PC-9 (cell line): ENCODE measurements at regions of chr7 and their contacts with region 1.

Region 1: DNA sequence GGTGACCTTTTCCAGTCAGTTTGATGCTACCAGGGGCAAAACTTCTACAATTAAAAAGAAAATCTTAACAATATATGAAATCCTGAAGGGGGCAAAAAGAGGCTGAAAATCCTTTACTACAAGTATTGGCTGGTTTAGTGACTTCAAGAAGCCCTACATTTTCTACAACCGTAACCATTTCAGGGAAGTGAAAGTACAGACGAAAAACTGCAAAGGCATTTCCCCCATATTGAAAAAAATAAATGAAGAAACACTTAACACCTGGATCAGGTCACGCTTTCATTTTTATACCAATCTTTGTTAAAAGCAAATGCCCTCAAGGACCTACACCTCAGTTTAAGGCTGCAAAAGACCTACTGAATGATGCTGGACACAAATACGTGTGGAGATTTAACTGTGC is 38.6 kb downstream of the IL6 start:
- DNase-seq: no peak
- H3K4me3 ChIP-seq: no peak overlapping the region
- H3K27ac ChIP-seq: no peak overlapping the region
- H3K4me1 ChIP-seq: no peaks in the 10 kb centered on the region
- H3K27me3 ChIP-seq: no peaks in the 10 kb centered on the region
- CTCF ChIP-seq: no peak

Region 2: GRCh38 chr7:22597845-22598244 is 167.8 kb before region 1 on chr7:
- CTCF ChIA-PET with region 1: no interaction called
- POLR2A ChIA-PET with region 1: interaction called, 10 read pairs
- intact Hi-C with region 1: no loop called
- DNase-seq: peak in 1 of 2 experiments; percentile 60
- H3K4me3 ChIP-seq: no peak overlapping the region
- H3K27ac ChIP-seq: peak overlapping the region; percentile 47
- H3K4me1 ChIP-seq: peaks cover 25% of the 10 kb centered on the region
- H3K27me3 ChIP-seq: no peaks in the 10 kb centered on the region
- CTCF ChIP-seq: no peak